Caco-2 (cell line): ENCODE measurements at regions of chr10 and their contacts with region 1.

Region 1: GRCh38 chr10:43574001-43574892 is at the start of gene ZNF239:
- DNase-seq: peak; percentile 95
- H3K4me3 ChIP-seq: peak within 1 kb of the TSS; percentile 85
- H3K4me3 Mint-ChIP-seq: peak within 1 kb of the TSS; percentile 90
- H3K27ac Mint-ChIP-seq: peak within 1 kb of the TSS; percentile 79
- H3K4me1 ChIP-seq: peaks cover 12% of the 10 kb centered on the region; the same call in 1 of the 2 replicates
- H3K4me1 Mint-ChIP-seq: peaks cover 21% of the 10 kb centered on the region
- H3K27me3 ChIP-seq: no peaks in the 10 kb centered on the region
- H3K27me3 Mint-ChIP-seq: no peaks in the 10 kb centered on the region
- CTCF ChIP-seq: no peak
- total RNA-seq, gene ZNF239: 15.2 and 16.4 TPM in 2 replicates

Region 2: DNA sequence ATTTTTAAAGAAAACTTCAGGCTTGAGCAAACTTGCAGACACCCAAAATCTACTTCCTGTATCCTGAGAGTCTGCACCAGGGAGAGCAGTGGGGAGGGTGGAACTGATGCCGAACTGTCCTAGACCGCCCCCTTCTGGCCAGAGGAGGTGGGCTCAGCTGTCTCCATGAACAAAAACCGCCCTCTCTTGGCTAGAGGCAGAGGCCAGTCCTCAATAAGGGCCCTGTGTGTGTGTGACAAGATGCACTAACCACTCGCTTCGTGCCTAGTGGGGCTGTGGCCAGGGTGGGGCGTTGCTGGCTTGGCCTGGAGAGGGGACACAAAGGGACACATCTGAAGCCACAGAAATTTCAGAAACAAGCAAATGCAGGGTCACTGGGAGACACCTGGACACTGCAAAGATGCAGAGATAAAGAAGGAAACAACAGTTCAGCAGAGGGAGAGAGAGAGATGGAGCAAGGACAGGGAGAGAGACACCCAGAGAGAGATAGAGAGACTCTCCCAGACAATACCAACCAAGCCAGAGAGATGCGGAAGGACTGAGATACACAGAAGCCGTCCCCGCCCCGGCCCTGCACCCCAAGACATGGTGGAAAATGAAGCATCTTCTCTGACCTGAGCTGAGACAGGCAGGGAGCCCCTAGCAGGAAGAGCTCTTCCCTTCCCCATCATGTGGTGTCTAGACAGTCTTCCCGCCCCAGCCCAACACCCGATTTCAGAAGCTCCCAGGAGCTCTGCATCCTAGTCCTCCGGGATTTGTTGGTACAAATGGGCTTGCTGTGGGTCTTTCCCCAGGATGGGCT is 225.5 kb before region 1 on chr10:
- CTCF ChIA-PET with region 1: no interaction called
- POLR2A ChIA-PET with region 1: no interaction called
- intact Hi-C with region 1: no loop called
- DNase-seq: peak; percentile 91 to 95
- H3K4me3 ChIP-seq: no peak overlapping the region
- H3K4me3 Mint-ChIP-seq: no peak overlapping the region
- H3K27ac Mint-ChIP-seq: peak overlapping the region; percentile 1
- H3K4me1 ChIP-seq: peaks cover 11% of the 10 kb centered on the region
- H3K4me1 Mint-ChIP-seq: peaks cover 10% of the 10 kb centered on the region
- H3K27me3 ChIP-seq: no peaks in the 10 kb centered on the region
- H3K27me3 Mint-ChIP-seq: no peaks in the 10 kb centered on the region
- CTCF ChIP-seq: peak; percentile 99 to 100

Region 3: DNA sequence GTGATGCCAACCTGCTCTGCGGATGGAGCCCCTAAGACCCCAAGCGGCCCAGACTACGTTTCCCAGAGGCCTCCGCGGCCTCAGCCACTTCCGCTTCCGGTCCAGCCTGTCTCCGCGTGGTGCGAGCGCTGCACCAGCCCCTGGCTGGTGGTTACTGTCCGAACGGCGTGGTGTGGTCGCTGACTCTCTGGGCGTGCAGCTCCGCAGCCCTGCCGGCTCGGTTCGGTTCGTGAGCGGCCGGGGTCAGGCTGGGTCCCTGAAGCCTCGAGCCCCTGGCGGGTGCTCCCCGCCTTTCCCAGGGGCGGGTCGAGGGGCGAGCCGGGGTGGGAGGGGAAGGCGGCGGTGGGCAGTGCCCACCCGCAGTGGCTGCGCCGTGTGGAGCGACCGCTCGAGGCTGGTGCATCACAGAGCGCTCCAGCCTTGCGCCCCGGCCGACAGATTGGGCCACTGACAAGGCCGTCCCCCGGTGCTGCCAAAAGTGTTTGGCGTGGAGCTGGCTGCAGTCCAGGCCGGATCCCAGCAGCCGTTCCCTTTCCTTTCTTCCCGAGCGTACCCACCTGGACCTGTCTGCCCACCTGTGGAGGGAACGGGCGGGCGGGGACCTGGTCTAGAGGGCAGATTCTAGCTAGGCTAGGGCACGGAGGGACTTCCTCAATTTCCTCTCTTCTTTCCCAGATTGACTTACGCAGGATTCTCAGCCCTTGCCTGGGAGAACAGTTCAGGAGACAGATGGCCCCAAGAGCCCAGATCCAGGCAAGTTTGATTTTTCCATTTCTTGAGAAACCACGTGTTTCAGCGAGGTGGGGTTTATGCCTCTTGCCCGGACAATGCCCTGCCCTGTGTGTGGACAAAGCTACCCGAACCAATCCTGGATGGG is 32.3 kb after region 1 on chr10 and contains the start of gene ZNF485:
- CTCF ChIA-PET with region 1: interaction called, 4 read pairs
- POLR2A ChIA-PET with region 1: interaction called, 3 read pairs
- intact Hi-C with region 1: loop called (anchors 1 kb)
- DNase-seq: peak; percentile 82 to 84
- H3K4me3 ChIP-seq: peak within 1 kb of the TSS; percentile 62
- H3K4me3 Mint-ChIP-seq: peak within 1 kb of the TSS; percentile 82
- H3K27ac Mint-ChIP-seq: peak within 1 kb of the TSS; percentile 52
- H3K4me1 ChIP-seq: peaks cover 4% of the 10 kb centered on the region; the same call in 1 of the 2 replicates
- H3K4me1 Mint-ChIP-seq: peaks cover 8% of the 10 kb centered on the region
- H3K27me3 ChIP-seq: no peaks in the 10 kb centered on the region
- H3K27me3 Mint-ChIP-seq: peaks cover 7% of the 10 kb centered on the region
- CTCF ChIP-seq: no peak
- total RNA-seq, gene ZNF485: 7.3 and 8.6 TPM in 2 replicates

Region 4: DNA sequence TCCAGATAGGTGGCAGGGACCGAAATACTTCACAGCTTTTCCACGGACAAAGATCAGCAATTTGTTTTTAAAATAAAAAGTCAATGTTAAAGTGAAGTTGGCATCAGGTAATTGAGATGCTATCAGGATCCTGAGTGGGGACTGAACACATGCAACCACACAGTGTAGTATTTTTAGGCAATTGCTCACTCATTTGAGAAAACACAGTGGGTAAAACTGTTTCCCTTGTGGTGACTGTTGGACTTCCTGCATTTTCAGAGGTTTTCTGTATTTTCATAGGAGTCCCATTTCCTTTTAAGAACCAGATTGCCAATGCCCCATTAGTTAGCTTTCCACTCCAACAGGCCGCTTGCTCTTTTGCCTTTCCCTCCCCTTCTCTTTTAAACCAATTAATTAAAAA is 233.9 kb after region 1 on chr10:
- CTCF ChIA-PET with region 1: no interaction called
- POLR2A ChIA-PET with region 1: no interaction called
- intact Hi-C with region 1: no loop called
- DNase-seq: no peak
- H3K4me3 ChIP-seq: no peak overlapping the region
- H3K4me3 Mint-ChIP-seq: no peak overlapping the region
- H3K27ac Mint-ChIP-seq: no peak overlapping the region
- H3K4me1 ChIP-seq: no peaks in the 10 kb centered on the region
- H3K4me1 Mint-ChIP-seq: no peaks in the 10 kb centered on the region
- H3K27me3 ChIP-seq: no peaks in the 10 kb centered on the region
- H3K27me3 Mint-ChIP-seq: peaks cover 20% of the 10 kb centered on the region
- CTCF ChIP-seq: no peak